Psoas muscle (tissue), 8 donors: ENCODE measurements at regions of chr1 and their contacts with region 1.

Region 1: DNA sequence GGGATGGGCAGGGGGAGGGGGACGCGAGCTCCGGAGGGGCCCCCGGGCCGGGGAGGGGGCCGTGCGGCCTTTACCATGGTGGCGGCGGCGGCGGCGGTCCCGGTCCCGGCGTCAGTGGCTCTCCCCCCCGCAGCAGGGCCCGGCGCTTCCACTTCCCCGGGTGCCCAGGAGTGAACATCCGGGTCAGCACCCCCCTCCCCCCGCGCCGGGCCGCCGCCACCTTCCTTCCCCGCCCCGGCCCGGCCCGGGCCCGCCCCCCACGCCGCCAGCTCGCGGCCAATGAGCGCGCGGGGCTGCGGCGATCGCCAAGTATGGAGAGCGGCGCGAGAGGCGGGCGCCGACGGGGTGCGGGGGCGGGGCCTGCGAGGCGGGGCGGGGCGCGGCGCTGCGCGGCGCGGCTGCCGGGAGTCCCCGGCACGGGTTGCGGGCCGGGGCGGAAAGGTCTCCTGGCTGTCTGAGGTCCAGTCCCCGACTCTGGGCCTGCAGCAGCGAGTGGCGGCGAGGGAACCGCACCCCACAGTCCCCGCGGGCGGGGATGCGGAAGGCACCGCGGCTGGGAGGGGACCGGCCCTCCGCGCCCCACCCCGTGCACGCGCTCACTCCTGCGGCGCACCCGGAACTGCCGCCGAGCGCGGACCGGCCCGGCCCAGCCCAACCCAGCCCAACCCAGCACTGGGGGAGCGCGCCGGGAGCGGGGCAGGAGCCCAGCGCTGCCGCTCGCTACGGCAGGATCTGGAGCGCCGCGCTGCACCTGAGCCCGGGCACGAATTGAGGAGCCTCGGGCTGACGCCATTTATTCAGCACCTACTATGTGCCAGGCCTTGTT is at the start of gene CAPZB:
- DNase-seq: peak; percentile 96 to 98
- ATAC-seq: peak; percentile 89 to 93 (median 92)
- H3K4me3 ChIP-seq: peak within 1 kb of the TSS; percentile 74
- H3K27ac ChIP-seq: peak within 1 kb of the TSS; percentile 91
- H3K4me1 ChIP-seq: peaks cover 52% of the 10 kb centered on the region
- H3K27me3 ChIP-seq: no peaks in the 10 kb centered on the region
- CTCF ChIP-seq: no peak
- total RNA-seq, gene CAPZB: 207 to 284 (median 232) TPM

Region 2: DNA sequence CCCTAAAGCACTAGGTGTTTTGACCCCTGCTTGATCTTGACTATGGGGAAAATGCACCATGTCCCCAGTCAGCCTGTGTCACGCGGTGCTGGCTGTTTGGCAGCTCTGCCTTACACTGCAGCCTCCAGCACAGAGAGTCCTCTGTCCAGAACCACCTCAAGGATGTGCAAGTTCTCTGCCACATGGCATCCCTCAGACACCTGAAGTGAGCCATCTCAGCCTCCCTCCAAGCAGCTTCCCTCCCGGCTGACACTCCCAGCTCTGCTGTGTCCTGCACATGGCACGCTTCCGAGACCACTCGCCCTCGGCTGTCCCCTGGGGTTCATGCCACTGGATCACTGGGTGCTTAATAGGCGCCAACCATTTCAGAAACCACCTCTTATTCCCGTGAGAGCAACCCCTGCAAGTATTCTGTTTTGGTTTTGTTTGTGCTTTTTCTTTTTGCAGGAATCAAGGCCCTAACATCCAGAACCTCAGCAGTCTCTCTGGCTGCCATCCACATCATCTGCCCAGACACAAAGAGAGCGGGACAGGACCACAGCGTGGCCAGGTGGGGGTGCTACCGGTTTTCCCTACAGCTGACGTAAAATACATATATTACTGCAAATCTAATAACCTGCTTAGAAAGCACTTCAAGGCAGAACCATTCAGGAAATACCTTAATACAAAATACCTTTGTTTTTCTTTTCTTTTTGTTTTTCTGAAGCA is 46.0 kb before region 1 on chr1:
- intact Hi-C with region 1: loop called (anchors 5 to 10 kb)
- DNase-seq: peak in 1 of 2 donors; percentile 71
- ATAC-seq: peak; percentile 33 to 67 (median 58)
- H3K4me3 ChIP-seq: no peak overlapping the region
- H3K27ac ChIP-seq: peak overlapping the region; percentile 79
- H3K4me1 ChIP-seq: peaks cover 86% of the 10 kb centered on the region
- H3K27me3 ChIP-seq: no peaks in the 10 kb centered on the region
- CTCF ChIP-seq: peak; percentile 20

Region 3: GRCh38 chr1:19596714-19597495 is 111.3 kb after region 1 on chr1:
- intact Hi-C with region 1: loop called in 1 of 2 experiments (anchors 5 kb)
- DNase-seq: peak; percentile 95 to 97
- ATAC-seq: peak; percentile 96 to 99 (median 97)
- H3K4me3 ChIP-seq: peak overlapping the region; percentile 83
- H3K27ac ChIP-seq: peak overlapping the region; percentile 90
- H3K4me1 ChIP-seq: peaks cover 30% of the 10 kb centered on the region
- H3K27me3 ChIP-seq: no peaks in the 10 kb centered on the region
- CTCF ChIP-seq: no peak

Region 4: GRCh38 chr1:20507564-20508410 is 1022.2 kb after region 1 on chr1 and contains the start of gene MUL1:
- intact Hi-C with region 1: no loop called
- DNase-seq: peak; percentile 98
- ATAC-seq: peak; percentile 98 to 99 (median 98)
- H3K4me3 ChIP-seq: peak within 1 kb of the TSS; percentile 79
- H3K27ac ChIP-seq: peak within 1 kb of the TSS; percentile 91
- H3K4me1 ChIP-seq: peaks cover 35% of the 10 kb centered on the region
- H3K27me3 ChIP-seq: peaks cover 0 to 3% (median 0%) of the 10 kb centered on the region in 3 donors
- CTCF ChIP-seq: no peak
- total RNA-seq, gene MUL1: 23.0 to 43.1 (median 33.3) TPM